Breast epithelium (tissue), 4 donors: ENCODE measurements at regions of chr5 and their contacts with region 1.

Region 1: GRCh38 chr5:143359869-143360268 is 43.6 kb downstream of the NR3C1 start:
- DNase-seq: no peak
- H3K4me3 ChIP-seq: no peak overlapping the region
- H3K27ac ChIP-seq: no peak overlapping the region
- H3K4me1 ChIP-seq: peaks cover 0 to 13% of the 10 kb centered on the region in 2 donors
- H3K27me3 ChIP-seq: no peaks in the 10 kb centered on the region
- CTCF ChIP-seq: no peak
- POLR2A ChIP-seq: no peak

Region 2: GRCh38 chr5:143395638-143396352 is 35.9 kb after region 1 on chr5:
- intact Hi-C with region 1: loop called (anchors 2 kb)
- DNase-seq: no peak
- H3K4me3 ChIP-seq: peak overlapping the region in 2 of 3 donors; percentile 7 to 92
- H3K27ac ChIP-seq: peak overlapping the region in 1 of 2 donors; percentile 38
- H3K4me1 ChIP-seq: peaks cover 3 to 14% of the 10 kb centered on the region in 2 donors
- H3K27me3 ChIP-seq: no peaks in the 10 kb centered on the region
- CTCF ChIP-seq: no peak
- POLR2A ChIP-seq: no peak

Region 3: DNA sequence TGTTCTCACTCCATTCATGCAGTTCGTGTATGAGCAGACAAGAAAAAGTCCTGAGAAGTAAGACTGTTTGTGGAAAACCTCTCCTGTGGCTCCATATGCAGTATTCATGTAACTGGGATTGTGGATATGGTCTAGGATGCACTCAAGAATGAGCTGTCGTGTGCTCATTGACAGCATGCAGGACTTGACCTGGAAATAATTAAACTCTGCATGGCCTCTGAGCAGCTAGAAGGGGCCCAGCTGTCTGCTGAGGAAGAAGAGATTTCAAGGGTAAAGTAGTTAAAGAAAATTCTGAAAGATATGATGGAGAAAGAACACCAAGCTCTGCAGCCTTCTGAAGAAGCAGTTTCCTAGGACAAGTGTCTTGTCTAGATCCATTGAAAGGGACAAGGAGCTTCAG is 900.3 kb after region 1 on chr5:
- intact Hi-C with region 1: no loop called
- DNase-seq: no peak
- H3K4me3 ChIP-seq: no peak overlapping the region
- H3K27ac ChIP-seq: no peak overlapping the region
- H3K4me1 ChIP-seq: no peaks in the 10 kb centered on the region
- H3K27me3 ChIP-seq: no peaks in the 10 kb centered on the region
- CTCF ChIP-seq: no peak
- POLR2A ChIP-seq: no peak